Heart left ventricle (tissue), 16 donors: ENCODE measurements at regions of chr5 and their contacts with region 1.

Region 1: DNA sequence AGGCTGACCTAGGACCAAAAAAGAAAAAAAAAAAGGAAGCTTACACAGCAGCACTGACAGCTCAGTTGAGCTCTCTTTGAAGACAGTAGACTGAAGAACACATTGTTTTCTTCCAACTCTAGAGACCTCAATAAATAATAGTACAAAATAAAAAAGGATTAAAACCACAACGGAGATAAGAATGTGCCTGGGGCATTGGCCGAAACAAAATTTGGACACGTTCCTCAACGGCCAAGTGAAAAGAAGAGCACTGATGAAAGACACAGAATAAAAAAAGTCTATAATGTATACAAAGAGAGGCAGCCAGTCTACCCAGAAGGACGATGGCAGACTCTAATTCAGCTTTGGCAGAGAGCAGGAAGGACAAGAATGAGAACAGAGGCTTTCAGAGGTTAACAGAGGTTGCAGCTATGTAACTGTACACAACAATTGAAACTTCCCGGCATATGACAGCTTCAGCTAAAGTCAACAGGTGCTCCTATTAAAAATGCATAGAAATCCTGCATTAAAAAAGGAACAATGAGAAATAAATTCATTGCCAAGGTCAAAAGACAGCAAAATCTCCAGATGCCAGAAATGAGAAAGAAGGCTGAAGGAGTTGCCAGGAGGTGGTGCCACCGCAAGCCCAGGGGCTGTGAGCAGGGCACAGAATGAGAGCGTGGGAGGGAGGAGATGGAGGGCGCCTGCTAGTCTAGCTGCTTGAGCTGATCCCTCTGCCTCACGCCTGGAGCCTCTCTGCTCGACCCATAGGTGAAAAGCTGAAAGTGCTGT is 113.9 kb downstream of the DCP2 start:
- DNase-seq: peak in 1 of 5 donors; percentile 45
- ATAC-seq: peak in 3 of 4 donors; percentile 33 to 49 (median 35)
- H3K4me3 ChIP-seq: peak overlapping the region in 3 of 12 donors; percentile 4 to 14 (median 10)
- H3K27ac ChIP-seq: peak overlapping the region in 9 of 12 donors; percentile 0 to 68 (median 41)
- H3K4me1 ChIP-seq: peaks cover 3 to 79% (median 53%) of the 10 kb centered on the region in 12 donors
- H3K27me3 ChIP-seq: no peaks in the 10 kb centered on the region
- CTCF ChIP-seq: peak in 5 of 12 donors; percentile 11 to 29 (median 24)
- POLR2A ChIP-seq: no peak

Region 2: DNA sequence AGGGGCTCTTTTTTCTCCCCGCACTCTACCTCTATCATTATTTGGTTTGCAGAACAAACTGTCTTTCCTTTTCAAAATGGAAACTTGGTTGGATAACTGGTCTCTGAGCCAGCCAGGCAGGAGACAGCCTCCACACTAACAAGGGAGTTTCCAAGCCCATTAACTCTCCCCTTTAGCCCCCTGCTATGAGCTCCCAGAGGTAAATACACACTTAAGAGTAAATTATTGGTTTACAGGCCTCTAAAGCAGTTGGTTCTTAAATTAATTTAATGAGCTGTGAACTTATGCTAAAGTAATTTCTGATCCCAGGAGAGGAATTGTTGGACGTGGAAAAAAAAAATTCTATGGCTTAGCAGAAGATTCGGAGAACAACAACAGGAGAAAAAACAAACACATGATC is 701.8 kb before region 1 on chr5:
- intact Hi-C with region 1: no loop called
- DNase-seq: no peak
- ATAC-seq: no peak
- H3K4me3 ChIP-seq: no peak overlapping the region
- H3K27ac ChIP-seq: no peak overlapping the region
- H3K4me1 ChIP-seq: peaks cover 0 to 25% (median 13%) of the 10 kb centered on the region in 12 donors
- H3K27me3 ChIP-seq: no peaks in the 10 kb centered on the region
- CTCF ChIP-seq: no peak
- POLR2A ChIP-seq: no peak

Region 3: DNA sequence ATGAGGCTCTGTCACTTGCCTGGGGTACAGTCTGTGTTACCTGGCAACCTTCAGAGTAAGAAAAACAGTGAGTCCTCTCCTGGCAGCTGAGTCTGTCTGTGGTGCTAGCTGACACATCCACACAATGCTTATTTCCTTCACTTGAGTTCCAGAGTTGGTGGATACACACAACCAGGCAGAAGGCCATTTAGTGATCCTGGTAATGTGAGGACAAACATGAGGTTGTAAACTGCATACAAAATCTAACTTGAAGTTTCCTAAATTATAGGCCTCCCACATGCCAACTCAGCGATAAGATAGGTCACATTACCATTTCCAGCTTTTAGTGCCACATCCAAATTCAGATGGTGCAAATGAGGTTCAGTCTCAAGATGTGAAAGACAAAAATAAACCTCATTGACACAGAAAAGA is 11.6 kb after region 1 on chr5:
- intact Hi-C with region 1: loop called in 1 of 10 experiments (anchors 1 kb)
- DNase-seq: no peak
- ATAC-seq: peak; percentile 73 to 89 (median 84)
- H3K4me3 ChIP-seq: no peak overlapping the region
- H3K27ac ChIP-seq: peak overlapping the region in 3 of 12 donors; percentile 17 to 38 (median 28)
- H3K4me1 ChIP-seq: peaks cover 0 to 20% (median 3%) of the 10 kb centered on the region in 12 donors
- H3K27me3 ChIP-seq: no peaks in the 10 kb centered on the region
- CTCF ChIP-seq: no peak
- POLR2A ChIP-seq: no peak

Region 4: GRCh38 chr5:113112435-113112834 is 21.9 kb after region 1 on chr5:
- intact Hi-C with region 1: no loop called
- DNase-seq: peak in 2 of 5 donors; percentile 43 to 44
- ATAC-seq: peak; percentile 50 to 74 (median 61)
- H3K4me3 ChIP-seq: no peak overlapping the region
- H3K27ac ChIP-seq: no peak overlapping the region
- H3K4me1 ChIP-seq: peaks cover 0 to 26% (median 10%) of the 10 kb centered on the region in 12 donors
- H3K27me3 ChIP-seq: no peaks in the 10 kb centered on the region
- CTCF ChIP-seq: no peak
- POLR2A ChIP-seq: no peak

Region 5: DNA sequence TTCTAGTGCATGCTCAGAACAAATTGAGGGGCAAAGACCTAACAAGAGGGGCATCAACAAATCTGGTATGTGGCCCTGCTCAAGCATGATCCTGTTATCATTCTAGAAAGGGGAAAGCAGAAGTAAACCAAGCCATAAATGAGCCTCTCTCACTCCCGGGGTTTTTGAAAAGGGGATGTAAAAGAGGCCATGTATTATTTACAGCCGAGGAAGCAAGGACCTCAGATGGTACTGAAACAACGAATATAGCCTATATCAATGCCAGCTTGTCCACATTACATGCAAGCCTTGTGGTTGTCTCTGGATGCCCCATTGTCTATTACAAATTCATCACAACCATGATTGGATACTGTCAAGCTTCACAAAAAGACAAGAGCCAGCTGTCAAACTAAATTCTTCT is 97.4 kb after region 1 on chr5:
- intact Hi-C with region 1: loop called in 1 of 10 experiments (anchors 10 kb)
- DNase-seq: no peak
- ATAC-seq: no peak
- H3K4me3 ChIP-seq: no peak overlapping the region
- H3K27ac ChIP-seq: no peak overlapping the region
- H3K4me1 ChIP-seq: peaks cover 0 to 43% (median 16%) of the 10 kb centered on the region in 12 donors
- H3K27me3 ChIP-seq: no peaks in the 10 kb centered on the region
- CTCF ChIP-seq: no peak
- POLR2A ChIP-seq: no peak